Endothelial cell of umbilical vein (primary cell): ENCODE measurements at regions of chr20 and their contacts with region 1.

Region 1: GRCh38 chr20:561437-562231 is 18.0 kb upstream of the CSNK2A1 start:
- DNase-seq: peak; percentile 79
- H3K4me3 ChIP-seq: no peak overlapping the region
- H3K27ac ChIP-seq: no peak overlapping the region
- H3K4me1 ChIP-seq: no peaks in the 10 kb centered on the region
- H3K27me3 ChIP-seq: peaks cover 0 to 9% of the 10 kb centered on the region in 2 experiments
- CTCF ChIP-seq: peak; percentile 95
- POLR2A ChIP-seq: no peak

Region 2: DNA sequence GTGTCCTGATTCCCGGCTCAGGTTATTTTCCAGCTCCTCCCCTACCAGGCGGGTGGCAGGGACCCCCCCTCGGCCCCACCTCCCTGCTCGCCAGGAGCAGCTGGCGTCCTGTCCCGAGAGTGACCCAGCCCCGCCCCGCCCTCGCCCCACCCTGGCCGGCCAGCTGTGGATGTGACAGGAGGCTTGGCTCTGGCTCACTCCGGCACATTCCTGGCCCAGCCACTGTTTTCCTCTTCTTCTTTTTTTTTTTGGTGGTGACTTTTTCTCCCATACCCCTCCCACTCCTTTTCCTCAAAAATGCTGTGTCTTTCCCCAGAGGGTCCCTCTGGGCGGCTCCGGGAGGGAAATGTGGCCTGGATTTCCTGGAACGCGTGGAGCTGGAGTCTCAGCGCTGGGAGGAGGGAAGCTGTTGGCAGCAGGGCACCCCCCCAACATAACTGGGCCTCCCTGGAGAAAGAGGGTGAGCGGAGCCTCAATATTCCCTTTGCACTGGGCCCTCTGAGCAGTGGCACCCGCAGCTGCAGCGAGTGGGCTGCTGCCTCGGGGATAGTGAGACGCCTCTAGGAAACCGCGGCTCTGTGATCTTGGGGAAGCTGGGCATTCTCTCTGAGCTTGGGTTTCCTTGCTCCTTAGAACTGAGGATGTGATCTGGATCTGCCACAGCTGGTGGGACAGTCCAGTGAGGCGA is 10.3 kb after region 1 on chr20:
- CTCF ChIA-PET with region 1: interaction called, 35 read pairs
- POLR2A ChIA-PET with region 1: no interaction called
- dilution Hi-C with region 1: no loop called
- intact Hi-C with region 1: no loop called
- DNase-seq: no peak
- H3K4me3 ChIP-seq: no peak overlapping the region
- H3K27ac ChIP-seq: peak overlapping the region; percentile 11
- H3K4me1 ChIP-seq: peaks cover 45% of the 10 kb centered on the region
- H3K27me3 ChIP-seq: peaks cover 0 to 5% of the 10 kb centered on the region in 2 experiments
- CTCF ChIP-seq: no peak
- POLR2A ChIP-seq: no peak

Region 3: GRCh38 chr20:577167-577791 is 15.6 kb after region 1 on chr20:
- CTCF ChIA-PET with region 1: interaction called, 35 read pairs
- POLR2A ChIA-PET with region 1: no interaction called
- dilution Hi-C with region 1: no loop called
- intact Hi-C with region 1: no loop called
- DNase-seq: peak; percentile 71
- H3K4me3 ChIP-seq: no peak overlapping the region
- H3K27ac ChIP-seq: no peak overlapping the region
- H3K4me1 ChIP-seq: peaks cover 47% of the 10 kb centered on the region
- H3K27me3 ChIP-seq: peaks cover 0 to 6% of the 10 kb centered on the region in 2 experiments
- CTCF ChIP-seq: peak; percentile 25 to 45
- POLR2A ChIP-seq: no peak